Activated CD8-positive, alpha-beta memory T cell treated with anti-CD3 and anti-CD28 coated beads, Interleukin-2, amount 10 ng/mL, durations not matched to agents 7 days and 5 days (primary cell): ENCODE measurements at regions of chr5 and their contacts with region 1.

Region 1: DNA sequence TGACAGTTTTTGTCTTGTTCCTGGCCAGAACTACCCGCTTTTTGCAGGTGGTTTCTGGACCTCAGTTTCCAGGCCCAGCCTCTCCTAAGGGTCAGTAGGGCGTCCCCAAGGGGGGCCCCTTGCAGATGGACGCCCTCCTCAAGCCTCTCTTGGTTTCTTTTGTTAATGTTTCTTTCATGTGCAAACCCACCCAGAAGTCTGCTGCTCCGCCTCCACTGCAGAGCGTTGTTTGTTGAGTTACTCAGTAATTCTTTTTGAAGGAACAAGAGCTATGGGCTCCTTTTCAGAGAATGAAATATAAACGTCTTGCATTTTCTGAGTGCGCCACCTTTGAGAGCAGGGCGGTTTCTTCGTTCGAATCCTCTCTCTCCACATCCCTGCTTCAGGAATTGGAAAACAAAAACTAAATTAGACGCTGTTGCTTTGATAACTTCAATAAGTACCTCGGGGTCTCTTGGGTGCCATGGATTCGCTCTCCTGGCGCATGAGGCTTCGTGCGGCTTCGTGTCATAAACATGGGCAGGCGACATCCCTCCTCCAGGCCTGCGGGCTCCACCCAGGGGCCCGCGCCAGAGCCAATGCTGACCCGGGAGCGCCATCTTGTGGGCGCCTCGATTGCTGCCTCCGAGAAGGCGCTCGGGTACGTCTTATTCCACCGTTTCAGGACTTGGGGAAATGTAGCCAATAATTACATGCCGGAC is 38.3 kb upstream of the CKMT2 start:
- DNase-seq: peak; percentile 86
- ATAC-seq: peak; percentile 99
- H3K4me3 Mint-ChIP-seq: peak overlapping the region; percentile 27
- H3K27ac Mint-ChIP-seq: peak overlapping the region; percentile 49
- H3K4me1 Mint-ChIP-seq: peaks cover 17% of the 10 kb centered on the region
- H3K27me3 Mint-ChIP-seq: no peaks in the 10 kb centered on the region

Region 2: GRCh38 chr5:80745490-80745889 is 449.3 kb before region 1 on chr5:
- CTCF ChIA-PET with region 1: no interaction called
- DNase-seq: no peak
- ATAC-seq: no peak
- H3K4me3 Mint-ChIP-seq: no peak overlapping the region
- H3K27ac Mint-ChIP-seq: no peak overlapping the region
- H3K4me1 Mint-ChIP-seq: peaks cover 31% of the 10 kb centered on the region
- H3K27me3 Mint-ChIP-seq: no peaks in the 10 kb centered on the region

Region 3: DNA sequence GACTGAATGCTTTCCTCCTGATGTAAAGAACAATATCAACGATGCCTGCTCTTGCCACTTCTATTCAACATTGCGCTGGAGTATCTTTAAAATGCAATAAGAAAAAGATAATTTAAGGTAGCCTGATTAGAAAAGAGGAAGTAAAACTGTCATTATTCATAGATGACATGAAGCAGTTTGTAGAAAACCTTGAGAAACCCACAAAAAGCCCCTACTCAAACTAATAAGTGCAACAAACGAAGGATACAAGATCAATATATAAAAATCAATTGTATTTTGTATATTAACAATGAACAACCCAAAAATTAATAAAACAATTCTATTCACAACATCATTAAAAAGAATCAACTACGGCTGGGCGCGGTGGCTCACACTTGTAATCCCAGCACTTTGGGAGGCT is 38.1 kb before region 1 on chr5:
- CTCF ChIA-PET with region 1: no interaction called
- DNase-seq: no peak
- ATAC-seq: no peak
- H3K4me3 Mint-ChIP-seq: no peak overlapping the region
- H3K27ac Mint-ChIP-seq: no peak overlapping the region
- H3K4me1 Mint-ChIP-seq: peaks cover 2% of the 10 kb centered on the region
- H3K27me3 Mint-ChIP-seq: no peaks in the 10 kb centered on the region

Region 4: GRCh38 chr5:81183811-81184748 is 10.7 kb before region 1 on chr5:
- CTCF ChIA-PET with region 1: interaction called, 11 read pairs
- DNase-seq: no peak
- ATAC-seq: no peak
- H3K4me3 Mint-ChIP-seq: no peak overlapping the region
- H3K27ac Mint-ChIP-seq: peak overlapping the region; percentile 64
- H3K4me1 Mint-ChIP-seq: peaks cover 43% of the 10 kb centered on the region
- H3K27me3 Mint-ChIP-seq: no peaks in the 10 kb centered on the region

Region 5: DNA sequence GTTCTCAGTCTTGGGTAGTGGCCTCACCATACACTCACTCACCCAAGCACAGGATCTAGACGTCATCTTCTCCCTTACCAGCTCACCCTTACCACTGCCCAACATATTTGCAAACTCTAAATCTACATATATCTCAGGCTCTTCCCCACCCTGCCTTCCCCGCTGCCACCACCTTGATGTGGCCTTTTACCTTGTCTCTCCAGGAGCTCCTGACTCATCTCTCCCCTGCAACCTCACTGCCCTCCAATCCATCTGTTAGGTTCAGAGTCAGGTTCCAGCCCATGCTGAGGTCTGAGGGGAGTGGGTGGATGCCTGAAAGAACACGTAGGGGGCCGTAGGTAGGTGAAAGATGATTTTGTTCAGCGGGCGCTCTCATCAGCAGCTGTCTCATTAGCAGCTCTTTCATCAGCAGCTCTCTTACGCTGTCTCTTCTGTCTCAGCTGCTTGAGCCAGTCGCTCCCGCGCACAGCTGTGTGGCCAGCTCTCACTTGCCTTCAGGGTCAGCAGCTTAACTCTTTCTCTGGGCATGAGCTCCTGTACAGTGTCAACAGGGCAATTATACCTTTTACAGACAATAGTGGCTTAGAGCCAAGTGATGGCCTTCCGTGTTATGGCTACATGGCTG is 15.2 kb after region 1 on chr5:
- CTCF ChIA-PET with region 1: interaction called, 13 read pairs
- DNase-seq: no peak
- ATAC-seq: peak; percentile 34
- H3K4me3 Mint-ChIP-seq: no peak overlapping the region
- H3K27ac Mint-ChIP-seq: no peak overlapping the region
- H3K4me1 Mint-ChIP-seq: peaks cover 12% of the 10 kb centered on the region
- H3K27me3 Mint-ChIP-seq: no peaks in the 10 kb centered on the region

Region 6: GRCh38 chr5:81525690-81526089 is 330.9 kb after region 1 on chr5:
- CTCF ChIA-PET with region 1: no interaction called
- DNase-seq: no peak
- ATAC-seq: peak; percentile 42
- H3K4me3 Mint-ChIP-seq: no peak overlapping the region
- H3K27ac Mint-ChIP-seq: no peak overlapping the region
- H3K4me1 Mint-ChIP-seq: peaks cover 10% of the 10 kb centered on the region
- H3K27me3 Mint-ChIP-seq: no peaks in the 10 kb centered on the region